ENCODE measurements at regions of chrX and their contacts with region 1.

Region 1: DNA sequence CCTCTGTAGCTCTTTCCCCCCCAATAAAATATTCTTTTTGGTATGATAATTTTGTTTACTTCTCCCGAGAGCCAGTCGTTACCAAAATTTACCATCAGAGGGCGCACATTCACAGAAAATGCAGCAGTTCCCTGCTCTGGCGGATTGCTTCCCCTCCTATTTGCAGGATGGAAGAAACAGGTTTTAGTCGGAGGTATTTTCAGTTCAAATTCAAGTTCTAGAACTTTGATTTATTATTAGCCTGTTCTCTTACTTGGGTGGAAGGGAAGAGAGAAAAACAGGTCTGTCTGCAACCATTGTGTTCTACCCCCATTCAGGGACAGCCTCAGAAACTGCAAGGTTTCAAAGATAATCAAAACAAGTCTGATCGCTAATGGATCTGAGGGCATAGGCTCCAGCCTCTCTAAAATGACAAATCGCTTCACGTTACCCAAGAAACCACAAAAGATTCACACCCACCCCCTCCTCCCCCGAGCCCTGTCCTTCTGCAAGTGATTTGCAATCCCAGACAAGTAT is 263.8 kb upstream of the RPS6KA3 start:
- DNase-seq: peak; percentile 79
- ATAC-seq: peak; percentile 60
- H3K4me3 ChIP-seq: peak overlapping the region; percentile 66
- H3K27ac ChIP-seq: no peak overlapping the region
- H3K4me1 ChIP-seq: peaks cover 39% of the 10 kb centered on the region
- H3K27me3 ChIP-seq: no peaks in the 10 kb centered on the region
- CTCF ChIP-seq: peak; percentile 84

Region 2: DNA sequence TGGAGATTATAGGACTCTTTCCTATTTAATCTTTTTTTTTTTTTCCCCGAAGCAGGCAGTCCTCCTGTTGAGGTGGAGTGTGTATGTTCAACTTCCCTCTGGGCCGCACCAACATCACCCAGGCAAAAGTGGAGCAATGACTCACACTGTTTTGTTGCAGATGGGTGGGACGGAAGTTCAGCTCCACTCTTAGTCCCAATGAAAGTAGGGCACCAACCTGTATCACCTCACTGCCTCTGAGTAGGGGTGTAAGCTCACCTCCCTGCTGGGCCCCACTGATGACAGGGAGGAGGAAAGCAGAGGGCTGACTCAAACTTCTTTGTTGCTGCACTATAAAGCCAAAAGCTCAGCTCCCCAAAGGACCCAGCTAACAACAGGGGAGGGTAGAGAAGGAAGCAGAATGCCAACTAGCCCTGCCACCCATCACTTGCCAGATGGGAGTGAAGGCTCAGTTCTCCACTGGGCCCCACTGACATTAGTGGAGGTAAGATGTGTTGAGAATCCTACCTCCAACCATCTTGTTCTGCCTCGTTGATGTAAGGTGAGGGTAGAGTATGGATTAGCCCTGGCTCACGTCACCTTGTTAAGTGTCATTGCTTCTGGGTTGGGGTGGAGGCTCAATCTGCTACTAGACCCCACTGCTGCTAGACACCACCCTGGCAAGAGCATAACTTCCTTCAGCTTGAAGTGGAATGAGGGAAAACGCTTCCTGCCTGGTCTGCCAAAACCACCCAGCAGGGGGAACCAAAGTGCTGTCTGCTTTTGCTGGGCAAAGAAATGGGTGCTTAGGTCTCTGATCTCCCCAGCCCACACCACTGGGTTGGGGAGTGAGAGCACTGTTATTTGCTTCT is 277.9 kb before region 1 on chrX:
- CTCF ChIA-PET with region 1: no interaction called
- POLR2A ChIA-PET with region 1: no interaction called
- intact Hi-C with region 1: loop called (anchors 1 kb)
- DNase-seq: peak; percentile 81
- ATAC-seq: peak; percentile 80
- H3K4me3 ChIP-seq: no peak overlapping the region
- H3K27ac ChIP-seq: no peak overlapping the region
- H3K4me1 ChIP-seq: peaks cover 29% of the 10 kb centered on the region
- H3K27me3 ChIP-seq: no peaks in the 10 kb centered on the region
- CTCF ChIP-seq: peak; percentile 75

Region 3: DNA sequence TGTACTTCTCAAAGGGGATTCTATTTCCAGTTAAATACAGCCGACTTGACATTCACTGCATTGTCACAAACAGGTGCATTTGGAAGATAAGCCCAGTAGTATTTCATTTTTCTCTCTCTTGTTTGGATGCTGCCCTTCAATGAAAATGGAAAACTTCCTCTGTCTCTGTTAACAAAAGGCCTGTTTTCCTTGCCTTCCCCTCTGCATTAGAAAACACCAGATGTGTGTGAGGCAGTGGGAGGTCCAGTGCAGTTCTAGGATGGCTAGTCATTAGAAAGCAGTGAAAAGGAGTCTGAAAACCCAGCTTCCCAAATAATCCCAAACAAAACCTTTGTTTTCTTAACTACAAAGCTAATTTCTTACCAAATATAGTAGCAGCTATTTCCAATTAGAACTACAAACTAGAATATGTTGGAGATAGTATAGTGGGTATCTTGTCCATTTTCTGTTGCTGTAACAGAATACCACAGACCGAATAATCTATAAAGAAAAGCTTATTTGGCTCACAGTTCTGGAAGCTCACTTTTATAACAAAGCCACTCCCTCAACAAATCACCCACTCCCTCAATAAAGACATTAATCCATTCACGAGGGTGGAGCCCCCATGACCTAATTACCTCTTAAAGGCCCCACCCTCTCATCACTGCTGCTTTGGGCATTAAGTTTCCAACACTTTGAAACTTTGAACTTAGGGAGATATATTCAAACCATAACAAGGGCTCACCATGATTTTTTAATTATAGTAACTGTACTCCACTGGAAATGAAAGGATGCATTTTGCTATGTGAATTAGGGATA is 188.3 kb after region 1 on chrX:
- CTCF ChIA-PET with region 1: no interaction called
- POLR2A ChIA-PET with region 1: no interaction called
- intact Hi-C with region 1: no loop called
- DNase-seq: no peak
- ATAC-seq: no peak
- H3K4me3 ChIP-seq: no peak overlapping the region
- H3K27ac ChIP-seq: no peak overlapping the region
- H3K4me1 ChIP-seq: no peaks in the 10 kb centered on the region
- H3K27me3 ChIP-seq: no peaks in the 10 kb centered on the region
- CTCF ChIP-seq: no peak

Region 4: DNA sequence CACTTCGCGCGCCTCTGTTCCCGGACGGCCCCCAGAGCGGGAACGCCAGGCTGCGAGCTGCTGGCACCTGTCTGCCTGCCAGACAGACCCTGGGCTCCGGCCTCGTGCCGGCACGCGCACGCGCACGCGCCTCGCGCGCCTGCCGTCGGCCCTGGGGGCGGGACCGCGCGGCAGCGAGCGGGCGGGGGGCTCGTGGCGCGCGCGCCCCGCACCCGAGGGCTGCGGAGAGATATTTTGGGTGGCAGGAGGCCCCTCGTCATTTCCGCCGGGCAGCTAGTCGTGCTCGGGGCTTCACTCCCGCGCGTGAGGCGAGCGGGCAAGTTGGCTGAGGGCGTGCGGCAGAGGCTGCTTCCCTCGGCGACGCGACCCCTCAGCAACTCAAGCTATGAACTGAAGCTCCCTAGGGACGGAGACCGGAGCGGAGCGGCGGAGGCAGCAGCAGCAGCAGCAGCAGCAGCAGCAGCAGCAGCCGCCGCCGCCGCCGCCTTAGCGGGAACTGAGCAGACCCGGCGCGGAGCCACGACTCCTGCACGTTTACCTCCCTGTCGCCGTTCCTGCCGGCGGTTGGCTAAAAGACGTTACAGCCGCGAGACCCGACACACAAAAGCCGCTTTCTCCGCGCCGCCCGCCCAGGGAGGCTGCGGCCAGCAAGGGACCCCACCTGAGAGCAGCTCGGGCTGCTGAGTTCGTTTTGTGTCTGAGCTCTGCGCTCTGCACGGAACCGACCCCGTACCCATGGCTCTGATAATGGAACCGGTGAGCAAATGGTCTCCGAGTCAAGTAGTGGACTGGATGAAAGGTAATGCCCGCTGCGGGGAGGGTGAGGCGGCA is 843.9 kb after region 1 on chrX and contains the start of gene CNKSR2:
- CTCF ChIA-PET with region 1: no interaction called
- POLR2A ChIA-PET with region 1: no interaction called
- intact Hi-C with region 1: loop called (anchors 10 kb)
- DNase-seq: peak; percentile 14
- ATAC-seq: peak; percentile 68; the same call in 1 of the 2 replicates
- H3K4me3 ChIP-seq: peak within 1 kb of the TSS; percentile 66
- H3K27ac ChIP-seq: no peak within 1 kb of the TSS
- H3K4me1 ChIP-seq: no peaks in the 10 kb centered on the region
- H3K27me3 ChIP-seq: peaks cover 52% of the 10 kb centered on the region
- CTCF ChIP-seq: no peak
- total RNA-seq, gene CNKSR2: 2.0 and 5.4 TPM in 2 replicates

Region 5: DNA sequence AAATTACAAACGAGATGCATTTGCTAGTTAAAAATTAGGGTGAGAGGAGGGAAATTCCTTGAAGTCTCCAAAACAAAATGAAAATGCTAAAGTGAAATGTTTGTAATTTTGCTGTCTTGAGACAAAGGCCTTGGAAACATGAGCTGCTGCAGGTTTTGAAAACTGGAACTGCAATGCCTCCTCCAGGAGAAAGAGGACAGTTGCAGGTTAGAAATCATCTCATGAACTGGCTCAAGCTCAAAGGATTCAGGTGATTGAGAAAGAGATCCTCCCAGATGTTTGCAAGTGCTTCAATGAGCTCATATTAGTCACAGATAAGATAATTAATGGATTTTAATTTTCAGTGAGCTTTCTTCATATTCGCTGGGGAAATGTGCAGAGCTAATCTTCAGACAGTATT is 1195.0 kb after region 1 on chrX:
- CTCF ChIA-PET with region 1: no interaction called
- POLR2A ChIA-PET with region 1: no interaction called
- intact Hi-C with region 1: loop called (anchors 1 kb)
- DNase-seq: peak; percentile 66
- ATAC-seq: peak; percentile 56
- H3K4me3 ChIP-seq: no peak overlapping the region
- H3K27ac ChIP-seq: no peak overlapping the region
- H3K4me1 ChIP-seq: no peaks in the 10 kb centered on the region
- H3K27me3 ChIP-seq: no peaks in the 10 kb centered on the region
- CTCF ChIP-seq: peak; percentile 77

Region 6: GRCh38 chrX:21839334-21840192 is 1309.1 kb after region 1 on chrX and contains the start of gene MBTPS2:
- CTCF ChIA-PET with region 1: interaction called, 3 read pairs
- POLR2A ChIA-PET with region 1: no interaction called
- intact Hi-C with region 1: loop called (anchors 10 kb)
- DNase-seq: peak; percentile 85
- ATAC-seq: peak; percentile 82
- H3K4me3 ChIP-seq: peak within 1 kb of the TSS; percentile 82
- H3K27ac ChIP-seq: peak within 1 kb of the TSS; percentile 46; the same call in 1 of the 2 replicates
- H3K4me1 ChIP-seq: peaks cover 12% of the 10 kb centered on the region; the same call in 1 of the 2 replicates
- H3K27me3 ChIP-seq: no peaks in the 10 kb centered on the region
- CTCF ChIP-seq: peak; percentile 24; the same call in 1 of the 2 replicates
- total RNA-seq, gene MBTPS2: 5.8 and 9.7 TPM in 2 replicates

Region 7: DNA sequence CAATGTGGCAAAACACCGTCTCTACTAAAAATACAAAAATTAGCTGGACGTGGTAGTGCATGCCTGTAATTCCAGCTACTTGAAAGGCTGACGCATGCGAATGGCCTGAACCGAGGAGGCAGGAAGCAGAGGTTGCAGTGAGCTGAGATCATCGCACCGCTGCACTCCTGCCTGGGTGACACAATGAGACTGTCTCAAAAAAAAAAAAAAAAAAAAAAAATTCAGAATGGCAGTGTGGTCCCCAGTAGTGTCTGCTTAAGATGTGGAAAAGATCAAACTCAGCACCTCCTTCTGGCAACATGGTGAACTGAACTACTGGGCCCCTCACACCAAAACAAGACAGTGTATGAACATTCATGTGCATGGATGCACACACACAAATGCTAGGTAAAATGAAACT is 1442.3 kb after region 1 on chrX:
- CTCF ChIA-PET with region 1: no interaction called
- POLR2A ChIA-PET with region 1: no interaction called
- intact Hi-C with region 1: loop called (anchors 2 kb)
- DNase-seq: peak; percentile 10
- ATAC-seq: no peak
- H3K4me3 ChIP-seq: no peak overlapping the region
- H3K27ac ChIP-seq: 0 out of 2 replicates have a peak overlapping the region, but pooled peaks have one; percentile 72
- H3K4me1 ChIP-seq: peaks cover 35% of the 10 kb centered on the region
- H3K27me3 ChIP-seq: no peaks in the 10 kb centered on the region
- CTCF ChIP-seq: peak; percentile 17; the same call in 1 of the 2 replicates

Measured in PC-3 (cell line).